Ascending aorta (tissue), 2 donors: ENCODE measurements at regions of chr3 and their contacts with region 1.

Region 1: GRCh38 chr3:187101184-187102072 is 37.9 kb downstream of the RPL39L start:
- DNase-seq: peak; percentile 21 to 89
- H3K4me3 ChIP-seq: peak overlapping the region; percentile 44 to 55
- H3K27ac ChIP-seq: peak overlapping the region; percentile 82 to 90
- H3K4me1 ChIP-seq: peaks cover 12 to 34% of the 10 kb centered on the region in 2 donors
- H3K27me3 ChIP-seq: no peaks in the 10 kb centered on the region
- CTCF ChIP-seq: no peak

Region 2: GRCh38 chr3:186821429-186822367 is 279.7 kb before region 1 on chr3:
- intact Hi-C with region 1: no loop called
- DNase-seq: peak in 1 of 2 donors; percentile 55
- H3K4me3 ChIP-seq: no peak overlapping the region
- H3K27ac ChIP-seq: no peak overlapping the region
- H3K4me1 ChIP-seq: peaks cover 0 to 5% of the 10 kb centered on the region in 2 donors
- H3K27me3 ChIP-seq: no peaks in the 10 kb centered on the region
- CTCF ChIP-seq: peak; percentile 22 to 69 (median 53)

Region 3: DNA sequence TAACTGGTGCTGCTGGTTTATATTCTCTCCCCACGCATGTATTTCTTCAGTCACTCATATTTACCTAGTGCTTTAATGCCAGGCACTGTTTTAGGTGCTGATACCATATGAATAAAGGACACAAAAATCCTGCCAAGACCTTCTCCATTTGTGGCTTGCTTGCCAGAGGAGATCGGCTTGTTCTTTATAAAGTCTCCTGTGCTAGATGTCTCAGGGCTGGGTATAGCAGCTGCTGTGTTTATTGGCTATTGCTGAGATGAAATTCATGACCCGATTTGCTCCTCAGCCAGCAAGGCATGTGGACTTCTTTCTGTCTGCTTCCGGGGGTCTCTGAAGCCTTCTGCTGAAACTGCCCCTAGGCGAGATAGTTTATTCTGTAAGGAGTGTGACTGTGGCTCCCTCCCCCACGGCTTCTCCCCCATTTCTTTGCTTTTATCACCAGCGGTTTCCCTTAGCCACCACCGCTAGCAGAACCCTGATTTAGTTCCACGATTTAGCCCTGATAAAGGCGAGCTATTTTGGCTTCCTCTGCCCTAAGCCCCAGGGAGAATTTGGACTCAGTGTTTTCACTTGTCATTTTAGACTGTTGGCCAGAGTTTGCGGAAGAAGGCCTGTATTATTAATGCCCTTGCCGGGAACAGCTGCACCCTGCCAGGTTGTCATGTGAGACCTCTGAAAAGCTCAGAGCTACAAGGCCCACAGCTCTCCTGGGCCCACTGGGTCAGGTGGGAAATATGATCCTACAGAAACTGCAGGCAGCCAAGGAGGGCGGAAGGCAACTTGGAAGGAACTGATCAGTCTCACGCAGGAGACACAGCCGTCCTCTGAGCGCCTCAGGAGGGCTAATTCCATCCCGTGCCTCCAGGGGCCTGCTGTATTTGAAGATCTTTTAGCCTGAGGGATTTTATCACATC is 124.3 kb before region 1 on chr3:
- intact Hi-C with region 1: loop called (anchors 5 kb)
- DNase-seq: peak; percentile 84 to 96
- H3K4me3 ChIP-seq: peak overlapping the region in 1 of 2 donors; percentile 42
- H3K27ac ChIP-seq: peak overlapping the region; percentile 85 to 91
- H3K4me1 ChIP-seq: peaks cover 23 to 60% of the 10 kb centered on the region in 2 donors
- H3K27me3 ChIP-seq: no peaks in the 10 kb centered on the region
- CTCF ChIP-seq: peak in 1 of 3 experiments; percentile 8

Region 4: DNA sequence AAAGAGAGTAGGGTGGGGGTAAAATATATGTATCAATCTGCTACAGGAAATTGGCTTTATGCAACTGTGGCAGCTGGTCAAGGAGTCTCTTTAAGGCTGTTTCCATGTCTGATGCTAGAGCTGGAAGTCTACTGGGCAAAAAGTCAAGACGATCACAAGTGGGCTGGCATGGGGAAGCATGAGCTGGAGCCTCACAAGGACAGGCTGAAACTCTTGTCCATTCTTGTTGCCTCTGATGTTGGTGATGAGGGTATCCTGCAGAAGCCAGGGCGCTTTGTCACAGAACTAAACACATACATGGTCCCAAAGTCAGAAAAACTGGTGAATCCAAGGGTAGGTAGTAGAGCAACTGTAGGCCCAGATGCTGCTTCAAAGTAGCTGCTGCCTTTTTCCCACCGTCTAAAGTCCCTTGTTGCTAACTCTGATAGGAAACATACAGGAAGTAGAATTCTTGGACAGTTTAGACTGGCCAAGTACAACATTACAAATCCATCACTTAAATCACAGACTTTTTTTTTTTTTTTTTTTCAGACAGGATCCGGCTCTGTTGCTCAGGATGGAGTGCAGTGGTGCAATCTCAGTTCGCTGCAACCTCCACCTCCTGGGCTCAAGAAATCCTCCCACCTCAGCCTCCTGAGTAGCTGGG is 16.3 kb before region 1 on chr3:
- intact Hi-C with region 1: loop called (anchors 2 kb)
- DNase-seq: peak in 1 of 2 donors; percentile 33
- H3K4me3 ChIP-seq: no peak overlapping the region
- H3K27ac ChIP-seq: peak overlapping the region; percentile 75 to 76
- H3K4me1 ChIP-seq: peaks cover 0 to 17% of the 10 kb centered on the region in 2 donors
- H3K27me3 ChIP-seq: no peaks in the 10 kb centered on the region
- CTCF ChIP-seq: no peak

Region 5: GRCh38 chr3:187572441-187572840 is 471.0 kb after region 1 on chr3:
- intact Hi-C with region 1: no loop called
- DNase-seq: no peak
- H3K4me3 ChIP-seq: no peak overlapping the region
- H3K27ac ChIP-seq: no peak overlapping the region
- H3K4me1 ChIP-seq: peaks cover 0 to 5% of the 10 kb centered on the region in 2 donors
- H3K27me3 ChIP-seq: no peaks in the 10 kb centered on the region
- CTCF ChIP-seq: no peak